A673 (cell line): ENCODE measurements at regions of chr4 and their contacts with region 1.

Region 1: DNA sequence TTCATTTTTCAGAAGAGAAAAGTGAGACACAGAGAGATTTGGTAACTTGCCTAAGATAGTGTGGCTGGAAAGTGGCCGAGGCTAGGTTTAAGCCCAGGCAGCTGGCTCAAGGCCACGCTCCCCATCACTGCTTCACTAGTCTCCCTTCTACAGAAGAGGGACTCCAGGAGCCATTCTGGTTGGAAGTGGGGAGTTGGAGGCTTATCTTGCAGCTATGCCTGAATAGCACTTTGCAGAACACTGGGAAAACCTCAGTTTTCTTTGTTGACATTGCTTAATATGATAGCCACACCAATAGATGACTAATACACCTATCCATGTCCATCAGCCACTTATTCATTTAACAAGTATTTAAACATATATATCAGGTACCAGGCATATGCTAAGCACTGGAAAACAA is 18.5 kb downstream of the LRRC66 start:
- DNase-seq: no peak
- H3K4me3 ChIP-seq: no peak overlapping the region
- H3K27ac ChIP-seq: no peak overlapping the region
- H3K4me1 ChIP-seq: no peaks in the 10 kb centered on the region
- H3K27me3 ChIP-seq: no peaks in the 10 kb centered on the region
- CTCF ChIP-seq: no peak

Region 2: GRCh38 chr4:51943221-51943934 is 58.2 kb before region 1 on chr4:
- CTCF ChIA-PET with region 1: no interaction called
- POLR2A ChIA-PET with region 1: no interaction called
- intact Hi-C with region 1: loop called (anchors 10 kb)
- DNase-seq: no peak
- H3K4me3 ChIP-seq: no peak overlapping the region
- H3K27ac ChIP-seq: no peak overlapping the region
- H3K4me1 ChIP-seq: no peaks in the 10 kb centered on the region
- H3K27me3 ChIP-seq: no peaks in the 10 kb centered on the region
- CTCF ChIP-seq: no peak

Region 3: DNA sequence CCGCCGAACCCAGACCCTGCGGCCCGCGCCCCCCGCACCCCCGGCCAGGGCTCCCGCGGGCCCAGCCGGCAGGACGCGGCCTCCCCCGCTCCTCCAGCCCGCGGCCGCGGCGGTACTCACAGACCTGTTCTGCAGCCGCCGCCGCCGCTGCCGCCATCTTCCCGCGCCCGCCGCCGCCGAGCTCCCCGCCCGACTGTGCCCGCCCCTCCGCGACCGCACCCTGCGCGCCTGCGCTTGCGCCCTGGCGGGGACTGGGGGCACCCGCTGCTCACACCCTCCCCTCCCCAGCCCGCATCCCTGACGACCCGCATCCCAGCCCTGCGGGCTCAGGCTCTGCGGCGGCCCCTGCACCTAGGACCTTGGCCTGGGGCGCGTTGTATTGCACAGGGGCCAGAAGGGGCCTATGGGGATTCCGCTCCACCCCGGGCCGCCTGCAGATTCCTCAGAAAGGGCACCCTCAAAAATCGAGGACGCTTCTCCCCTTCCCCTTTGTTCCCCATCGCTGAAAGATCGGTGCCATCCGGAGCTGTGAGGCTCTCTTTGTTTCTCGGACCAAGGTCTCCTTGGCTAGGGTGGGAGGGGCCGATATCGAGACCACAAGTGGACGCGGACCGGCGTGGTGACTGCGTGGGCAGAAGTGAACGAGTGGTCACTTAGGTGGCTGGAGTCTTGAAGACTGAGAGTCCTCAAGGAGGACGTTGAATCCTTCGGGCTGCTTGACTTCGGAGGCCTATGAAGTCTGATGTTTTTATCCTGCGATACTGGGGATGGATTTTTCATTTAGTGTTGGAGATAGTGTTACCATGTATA is 36.7 kb after region 1 on chr4 and contains the start of gene SGCB:
- CTCF ChIA-PET with region 1: no interaction called
- POLR2A ChIA-PET with region 1: no interaction called
- intact Hi-C with region 1: no loop called
- DNase-seq: peak; percentile 54
- H3K4me3 ChIP-seq: peak within 1 kb of the TSS; percentile 61
- H3K27ac ChIP-seq: no peak within 1 kb of the TSS
- H3K4me1 ChIP-seq: peaks cover 6% of the 10 kb centered on the region
- H3K27me3 ChIP-seq: no peaks in the 10 kb centered on the region
- CTCF ChIP-seq: no peak
- total RNA-seq, gene SGCB: 32.6 and 38.6 TPM in 2 replicates

Region 4: GRCh38 chr4:52059372-52059771 is 57.8 kb after region 1 on chr4:
- CTCF ChIA-PET with region 1: no interaction called
- POLR2A ChIA-PET with region 1: no interaction called
- intact Hi-C with region 1: loop called (anchors 5 kb)
- DNase-seq: peak; percentile 11
- H3K4me3 ChIP-seq: no peak overlapping the region
- H3K27ac ChIP-seq: no peak overlapping the region
- H3K4me1 ChIP-seq: no peaks in the 10 kb centered on the region
- H3K27me3 ChIP-seq: no peaks in the 10 kb centered on the region
- CTCF ChIP-seq: no peak